ENCODE measurements at regions of chr5 and their contacts with region 1.

Region 1: DNA sequence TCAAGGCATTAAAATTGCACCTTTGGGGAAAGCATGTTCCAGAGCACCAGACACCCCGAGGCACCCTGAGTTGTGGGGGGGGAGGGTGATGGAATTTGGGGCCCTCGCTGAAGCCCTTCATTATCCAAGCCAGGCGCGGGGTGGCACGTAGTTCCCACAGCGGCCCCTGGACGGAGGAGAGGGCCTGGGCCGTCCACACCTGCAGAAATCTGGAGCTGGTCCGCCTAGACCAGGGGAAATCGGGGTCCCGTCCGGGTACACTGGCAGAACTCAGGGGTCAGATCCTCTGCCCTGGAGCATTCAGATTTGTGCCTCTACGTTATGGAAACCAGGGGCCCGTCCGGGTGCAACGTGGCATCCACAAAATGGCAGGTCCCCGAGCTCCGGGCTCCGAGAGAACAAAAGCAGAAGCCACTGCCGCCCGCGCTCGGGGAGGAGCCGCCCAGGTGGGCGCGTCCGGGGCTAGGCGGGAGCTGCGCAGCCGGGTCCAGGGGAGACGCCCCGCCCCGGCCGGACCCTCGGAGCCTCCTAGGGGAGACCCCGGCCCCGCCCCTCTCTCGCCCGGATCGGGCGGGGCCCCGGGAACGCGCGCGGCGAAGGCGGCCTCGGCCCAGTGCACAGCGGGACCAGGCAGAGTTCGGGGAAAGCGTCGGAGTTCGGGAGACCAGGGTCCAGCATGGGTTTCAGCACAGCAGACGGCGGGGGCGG is at the start of gene PLEKHG4B:
- DNase-seq: peak; percentile 82 to 96
- H3K4me3 ChIP-seq: peak within 1 kb of the TSS; percentile 62 to 83 (median 66)
- H3K27ac ChIP-seq: peak within 1 kb of the TSS; percentile 79
- H3K4me1 ChIP-seq: peaks cover 6 to 23% (median 17%) of the 10 kb centered on the region in 4 experiments
- H3K27me3 ChIP-seq: no peaks in the 10 kb centered on the region; a peak in 1 of 7 replicates
- CTCF ChIP-seq: no peak
- EP300 ChIP-seq: no peak
- POLR2A ChIP-seq: peak in 1 of 2 experiments; percentile 70; a peak in 2 of 3 replicates
- RAD21 ChIP-seq: no peak; a peak in 1 of 4 replicates
- total RNA-seq, gene PLEKHG4B: 42.9 and 43.6 TPM in 2 replicates

Region 2: GRCh38 chr5:53281-54174 is 38.2 kb before region 1 on chr5:
- CTCF ChIA-PET with region 1: interaction called, 3 read pairs
- POLR2A ChIA-PET with region 1: interaction called, 18 read pairs
- DNase-seq: peak; percentile 46 to 94
- H3K4me3 ChIP-seq: peak overlapping the region; percentile 57 to 92 (median 74)
- H3K27ac ChIP-seq: peak overlapping the region; percentile 60; the same call in 1 of the 2 replicates
- H3K4me1 ChIP-seq: peaks cover 0 to 12% (median 4%) of the 10 kb centered on the region in 4 experiments; a peak in 5 of 7 replicates
- H3K27me3 ChIP-seq: peaks cover 20 to 50% (median 40%) of the 10 kb centered on the region in 4 experiments
- CTCF ChIP-seq: peak in 1 of 3 experiments; percentile 23; a peak in 1 of 4 replicates
- EP300 ChIP-seq: no peak
- POLR2A ChIP-seq: peak; percentile 65 to 73
- RAD21 ChIP-seq: peak; percentile 19 to 30; a peak in 3 of 4 replicates

Region 3: DNA sequence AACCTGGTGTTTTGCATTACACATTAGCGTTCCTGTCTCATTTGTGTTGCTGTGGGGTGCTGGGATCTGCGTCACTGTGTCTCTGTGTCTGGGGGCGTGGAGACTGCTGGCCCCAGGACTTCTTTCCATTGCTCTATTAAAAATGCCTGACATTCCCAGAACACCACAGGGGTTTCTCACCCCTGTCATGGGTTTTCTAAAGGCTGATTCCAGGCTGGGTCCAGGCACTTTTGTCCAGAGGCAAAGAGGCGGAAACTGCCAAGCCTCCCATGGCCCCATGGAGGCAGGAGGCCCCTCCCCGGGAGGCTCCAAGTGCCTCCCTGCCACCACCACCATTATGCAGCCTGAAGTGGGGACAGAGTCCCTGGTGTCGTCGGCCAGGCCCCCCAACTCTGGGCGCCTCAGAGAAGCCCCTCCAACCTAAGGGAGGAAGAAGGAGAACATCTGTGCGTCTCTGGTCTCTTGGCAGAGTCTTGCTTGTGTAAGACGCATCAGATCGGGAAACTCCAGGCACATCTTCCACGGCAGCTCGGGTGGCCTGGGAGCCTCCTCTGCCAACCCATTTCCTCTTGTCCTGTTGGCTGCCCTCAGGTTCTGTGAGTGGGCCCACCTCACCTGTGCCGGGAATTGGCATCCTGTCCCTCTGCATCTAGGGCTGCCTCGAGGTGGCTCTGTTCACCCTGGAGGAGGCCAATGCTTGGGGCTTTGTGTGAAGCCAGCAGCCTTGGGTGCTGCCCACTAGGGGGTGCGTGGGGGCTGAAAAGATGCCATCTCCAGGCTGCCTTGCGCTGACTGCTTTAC is 13.5 kb before region 1 on chr5:
- CTCF ChIA-PET with region 1: interaction called, 3 read pairs
- POLR2A ChIA-PET with region 1: interaction called, 65 read pairs
- DNase-seq: no peak
- H3K4me3 ChIP-seq: no peak overlapping the region
- H3K27ac ChIP-seq: no peak overlapping the region
- H3K4me1 ChIP-seq: peaks cover 3 to 28% (median 18%) of the 10 kb centered on the region in 4 experiments
- H3K27me3 ChIP-seq: no peaks in the 10 kb centered on the region; a peak in 1 of 7 replicates
- CTCF ChIP-seq: peak in 2 of 3 experiments; percentile 47 to 53; a peak in 3 of 4 replicates
- EP300 ChIP-seq: no peak
- POLR2A ChIP-seq: no peak
- RAD21 ChIP-seq: peak; percentile 48 to 58

Region 4: DNA sequence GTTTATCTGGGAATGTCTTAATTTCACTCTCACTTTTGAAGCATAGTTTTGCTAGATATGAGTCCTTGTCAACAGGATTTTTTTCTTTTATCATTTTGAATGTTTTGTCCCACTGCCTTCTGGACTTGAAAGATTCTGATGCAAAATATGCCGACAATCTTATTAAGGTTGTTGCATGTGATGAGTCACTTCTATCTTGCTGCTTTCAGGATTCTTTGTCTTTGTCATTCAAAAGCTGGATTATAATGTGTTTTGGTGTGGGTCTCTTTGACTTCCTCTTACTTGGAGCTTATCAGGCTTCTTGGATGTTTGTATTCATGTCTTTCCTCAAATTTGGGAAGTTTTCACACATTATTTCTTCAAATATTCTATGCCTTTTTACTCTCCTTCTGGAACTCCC is 34.1 kb after region 1 on chr5:
- CTCF ChIA-PET with region 1: no interaction called
- POLR2A ChIA-PET with region 1: interaction called, 13 read pairs
- DNase-seq: no peak
- H3K4me3 ChIP-seq: peak overlapping the region in 1 of 4 experiments; percentile 21; a peak in 1 of 8 replicates
- H3K27ac ChIP-seq: no peak overlapping the region; the same call in 1 of the 2 replicates
- H3K4me1 ChIP-seq: peaks cover 0 to 22% (median 9%) of the 10 kb centered on the region in 4 experiments; a peak in 4 of 7 replicates
- H3K27me3 ChIP-seq: no peaks in the 10 kb centered on the region
- CTCF ChIP-seq: no peak
- EP300 ChIP-seq: no peak
- POLR2A ChIP-seq: no peak
- RAD21 ChIP-seq: no peak

Region 5: DNA sequence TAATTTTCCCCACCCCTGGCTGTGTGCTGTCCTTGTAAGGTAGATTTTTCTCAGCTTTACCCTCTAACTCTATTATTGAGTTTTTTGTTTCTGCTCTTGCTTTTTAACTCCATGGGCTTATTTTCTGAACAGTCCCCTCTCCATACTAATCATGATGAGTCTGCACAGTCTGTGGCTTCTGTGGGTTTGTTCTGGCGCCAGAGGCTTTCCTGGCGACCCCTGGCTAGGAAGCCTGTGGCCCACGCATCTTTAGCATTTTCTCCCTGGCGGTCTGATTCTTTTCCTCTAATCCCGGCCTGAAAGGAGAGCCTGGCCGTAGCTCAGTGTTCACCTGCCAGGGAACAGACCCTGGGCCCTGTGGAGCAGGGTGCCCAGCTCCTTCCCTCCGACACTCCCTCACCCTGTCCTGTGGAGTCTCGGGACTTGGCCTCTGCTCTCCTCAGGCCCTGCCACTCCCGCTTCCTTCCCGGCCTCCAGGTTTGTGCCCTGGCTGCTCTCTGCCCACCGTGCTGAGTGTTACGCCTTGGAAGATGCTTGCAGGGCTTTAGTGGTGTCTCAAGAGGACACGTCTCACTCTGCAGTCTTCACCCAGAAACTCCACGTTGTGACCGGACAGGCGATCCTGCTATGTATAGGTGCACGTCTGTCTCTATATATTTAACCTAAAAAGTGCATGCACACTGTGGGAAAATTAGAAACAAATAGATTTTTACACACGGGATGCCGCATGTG is 67.9 kb after region 1 on chr5:
- CTCF ChIA-PET with region 1: interaction called, 3 read pairs
- POLR2A ChIA-PET with region 1: interaction called, 18 read pairs
- DNase-seq: no peak
- H3K4me3 ChIP-seq: no peak overlapping the region
- H3K27ac ChIP-seq: no peak overlapping the region
- H3K4me1 ChIP-seq: no peaks in the 10 kb centered on the region; a peak in 1 of 7 replicates
- H3K27me3 ChIP-seq: no peaks in the 10 kb centered on the region
- CTCF ChIP-seq: no peak
- EP300 ChIP-seq: no peak
- POLR2A ChIP-seq: no peak
- RAD21 ChIP-seq: no peak